Esophagus muscularis mucosa (tissue), 4 donors: ENCODE measurements at regions of chr16 and their contacts with region 1.

Region 1: GRCh38 chr16:12089492-12090150 is 113.1 kb downstream of the SNX29 start:
- DNase-seq: no peak
- H3K4me3 ChIP-seq: peak overlapping the region; percentile 17 to 41 (median 24)
- H3K27ac ChIP-seq: peak overlapping the region in 1 of 4 donors; percentile 26
- H3K4me1 ChIP-seq: peaks cover 14 to 36% (median 27%) of the 10 kb centered on the region in 4 donors
- H3K27me3 ChIP-seq: no peaks in the 10 kb centered on the region
- CTCF ChIP-seq: no peak
- EP300 ChIP-seq: no peak
- POLR2A ChIP-seq: no peak

Region 2: GRCh38 chr16:13767215-13767614 is 1677.6 kb after region 1 on chr16:
- intact Hi-C with region 1: loop called (anchors 5 kb)
- DNase-seq: no peak
- H3K4me3 ChIP-seq: no peak overlapping the region
- H3K27ac ChIP-seq: no peak overlapping the region
- H3K4me1 ChIP-seq: no peaks in the 10 kb centered on the region
- H3K27me3 ChIP-seq: peaks cover 0 to 8% (median 0%) of the 10 kb centered on the region in 4 donors
- CTCF ChIP-seq: peak; percentile 29 to 48 (median 41)
- EP300 ChIP-seq: no peak
- POLR2A ChIP-seq: no peak